ENCODE measurements at regions of chr1 and their contacts with region 1.

Region 1: GRCh38 chr1:155001675-155002463 is 733 bp upstream of the ZBTB7B start:
- DNase-seq: peak; percentile 99
- ATAC-seq: peak; percentile 84
- H3K4me3 ChIP-seq: peak overlapping the region; percentile 75
- H3K27ac ChIP-seq: peak overlapping the region; percentile 99
- H3K4me1 ChIP-seq: peaks cover 21% of the 10 kb centered on the region
- H3K27me3 ChIP-seq: no peaks in the 10 kb centered on the region
- CTCF ChIP-seq: peak; percentile 50
- POLR2A ChIP-seq: no peak
- RAD21 ChIP-seq: 0 out of 2 replicates have a peak, but pooled peaks have one; percentile 11

Region 2: GRCh38 chr1:154936555-154937084 is 65.2 kb before region 1 on chr1 and contains the start of gene PMVK:
- CTCF ChIA-PET with region 1: no interaction called
- POLR2A ChIA-PET with region 1: no interaction called
- dilution Hi-C with region 1: no loop called
- in situ Hi-C with region 1: no loop called
- intact Hi-C with region 1: loop called (anchors 2 kb)
- DNase-seq: peak; percentile 95
- ATAC-seq: peak; percentile 97
- H3K4me3 ChIP-seq: peak within 1 kb of the TSS; percentile 63
- H3K27ac ChIP-seq: peak within 1 kb of the TSS; percentile 94
- H3K4me1 ChIP-seq: peaks cover 2% of the 10 kb centered on the region
- H3K27me3 ChIP-seq: no peaks in the 10 kb centered on the region
- CTCF ChIP-seq: peak; percentile 40
- POLR2A ChIP-seq: peak; percentile 64
- RAD21 ChIP-seq: peak; percentile 24; the same call in 1 of the 2 replicates
- total RNA-seq, gene PMVK: 7.2 and 9.0 TPM in 2 replicates

Region 3: GRCh38 chr1:154961497-154962262 is 40.2 kb before region 1 on chr1 and contains the start of gene PYGO2:
- CTCF ChIA-PET with region 1: interaction called, 11 read pairs
- POLR2A ChIA-PET with region 1: no interaction called
- dilution Hi-C with region 1: no loop called
- in situ Hi-C with region 1: no loop called
- intact Hi-C with region 1: loop called (anchors 2 kb)
- DNase-seq: peak; percentile 66
- ATAC-seq: peak; percentile 86
- H3K4me3 ChIP-seq: peak within 1 kb of the TSS; percentile 86
- H3K27ac ChIP-seq: peak within 1 kb of the TSS; percentile 96
- H3K4me1 ChIP-seq: peaks cover 9% of the 10 kb centered on the region
- H3K27me3 ChIP-seq: no peaks in the 10 kb centered on the region
- CTCF ChIP-seq: peak; percentile 69
- POLR2A ChIP-seq: peak; percentile 40
- RAD21 ChIP-seq: peak; percentile 62
- total RNA-seq, gene PYGO2: 5.3 and 5.4 TPM in 2 replicates

Region 4: GRCh38 chr1:154974063-154974807 is 27.6 kb before region 1 on chr1 and contains the start of gene CKS1B:
- CTCF ChIA-PET with region 1: interaction called, 9 read pairs
- POLR2A ChIA-PET with region 1: interaction called, 4 read pairs
- dilution Hi-C with region 1: no loop called
- in situ Hi-C with region 1: no loop called
- intact Hi-C with region 1: loop called (anchors 1 kb)
- DNase-seq: peak; percentile 100
- ATAC-seq: peak; percentile 62
- H3K4me3 ChIP-seq: peak within 1 kb of the TSS; percentile 57
- H3K27ac ChIP-seq: peak within 1 kb of the TSS; percentile 89
- H3K4me1 ChIP-seq: peaks cover 11% of the 10 kb centered on the region
- H3K27me3 ChIP-seq: no peaks in the 10 kb centered on the region
- CTCF ChIP-seq: no peak
- POLR2A ChIP-seq: peak; percentile 84
- RAD21 ChIP-seq: no peak
- total RNA-seq, gene CKS1B: 129 and 140 TPM in 2 replicates

Region 5: GRCh38 chr1:155050560-155051341 is 48.9 kb after region 1 on chr1 and contains the start of gene ADAM15:
- CTCF ChIA-PET with region 1: no interaction called
- POLR2A ChIA-PET with region 1: no interaction called
- dilution Hi-C with region 1: no loop called
- in situ Hi-C with region 1: no loop called
- intact Hi-C with region 1: loop called (anchors 5 kb)
- DNase-seq: peak; percentile 53
- ATAC-seq: peak; percentile 85
- H3K4me3 ChIP-seq: peak within 1 kb of the TSS; percentile 75
- H3K27ac ChIP-seq: peak within 1 kb of the TSS; percentile 43; the same call in 1 of the 2 replicates
- H3K4me1 ChIP-seq: peaks cover 8% of the 10 kb centered on the region
- H3K27me3 ChIP-seq: no peaks in the 10 kb centered on the region
- CTCF ChIP-seq: peak; percentile 85
- POLR2A ChIP-seq: no peak
- RAD21 ChIP-seq: peak; percentile 53
- total RNA-seq, gene ADAM15: 25.6 and 29.7 TPM in 2 replicates

Measured in IMR-90 (cell line).